Activated CD8-positive, alpha-beta T cell treated with anti-CD3 and anti-CD28 coated beads for 36 hours (primary cell): ENCODE measurements at regions of chr7 and their contacts with region 1.

Region 1: GRCh38 chr7:6577365-6578113 is at the start of gene ZDHHC4:
- DNase-seq: peak; percentile 93
- ATAC-seq: peak; percentile 95
- H3K4me3 Mint-ChIP-seq: peak within 1 kb of the TSS; percentile 84
- H3K27ac Mint-ChIP-seq: peak within 1 kb of the TSS; percentile 89
- H3K4me1 Mint-ChIP-seq: peaks cover 28% of the 10 kb centered on the region
- H3K27me3 Mint-ChIP-seq: no peaks in the 10 kb centered on the region
- CTCF ChIP-seq: no peak
- total RNA-seq, gene ZDHHC4: 27.8 to 32.0 TPM

Region 2: GRCh38 chr7:6460303-6460702 is 117.2 kb before region 1 on chr7:
- CTCF ChIA-PET with region 1: no interaction called
- POLR2A ChIA-PET with region 1: no interaction called
- intact Hi-C with region 1: no loop called
- DNase-seq: no peak
- ATAC-seq: no peak
- H3K4me3 Mint-ChIP-seq: no peak overlapping the region
- H3K27ac Mint-ChIP-seq: no peak overlapping the region
- H3K4me1 Mint-ChIP-seq: peaks cover 2% of the 10 kb centered on the region
- H3K27me3 Mint-ChIP-seq: no peaks in the 10 kb centered on the region
- CTCF ChIP-seq: no peak

Region 3: DNA sequence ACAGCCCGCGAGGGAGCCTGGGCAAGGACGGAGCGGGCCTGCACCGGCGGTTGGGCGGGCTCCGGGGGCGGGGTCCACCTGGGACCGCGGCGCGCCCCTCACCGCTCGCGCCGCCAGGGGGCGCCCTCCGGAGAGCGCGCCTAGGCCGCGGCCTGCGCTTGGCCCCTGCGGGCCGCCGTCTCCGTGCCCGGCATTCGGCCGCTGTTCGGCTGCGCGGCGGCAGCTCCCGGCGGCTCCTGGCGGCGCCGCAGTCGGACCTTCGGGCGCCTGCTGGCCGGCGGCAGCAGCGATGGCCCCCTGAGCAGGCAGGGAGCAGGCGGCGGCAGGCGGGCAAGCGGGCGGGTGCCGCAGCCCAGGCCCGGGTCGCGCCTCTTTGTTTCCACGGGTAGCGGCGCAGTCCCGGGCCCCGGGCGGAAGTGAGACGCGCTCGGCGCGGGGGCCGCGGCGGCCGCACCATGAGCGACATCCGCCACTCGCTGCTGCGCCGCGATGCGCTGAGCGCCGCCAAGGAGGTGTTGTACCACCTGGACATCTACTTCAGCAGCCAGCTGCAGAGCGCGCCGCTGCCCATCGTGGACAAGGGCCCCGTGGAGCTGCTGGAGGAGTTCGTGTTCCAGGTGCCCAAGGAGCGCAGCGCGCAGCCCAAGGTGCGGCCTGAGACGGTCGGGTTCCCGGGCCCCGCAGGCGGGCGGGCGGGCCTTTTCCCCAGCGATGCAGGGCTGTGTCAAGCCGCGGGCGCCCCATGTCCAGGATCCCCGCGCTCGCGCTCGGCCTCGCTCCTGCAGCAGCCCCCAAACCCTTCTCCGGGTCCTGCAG is 12.5 kb after region 1 on chr7 and contains the start of gene INTS15:
- CTCF ChIA-PET with region 1: interaction called, 44 read pairs
- POLR2A ChIA-PET with region 1: interaction called, 18 read pairs
- intact Hi-C with region 1: no loop called
- DNase-seq: peak; percentile 82
- ATAC-seq: peak; percentile 92
- H3K4me3 Mint-ChIP-seq: peak within 1 kb of the TSS; percentile 87
- H3K27ac Mint-ChIP-seq: peak within 1 kb of the TSS; percentile 84
- H3K4me1 Mint-ChIP-seq: peaks cover 22% of the 10 kb centered on the region
- H3K27me3 Mint-ChIP-seq: no peaks in the 10 kb centered on the region
- CTCF ChIP-seq: peak; percentile 76
- total RNA-seq, gene INTS15: 26.8 to 29.8 TPM